Astrocyte of the cerebellum (primary cell): ENCODE measurements at regions of chr6 and their contacts with region 1.

Region 1: DNA sequence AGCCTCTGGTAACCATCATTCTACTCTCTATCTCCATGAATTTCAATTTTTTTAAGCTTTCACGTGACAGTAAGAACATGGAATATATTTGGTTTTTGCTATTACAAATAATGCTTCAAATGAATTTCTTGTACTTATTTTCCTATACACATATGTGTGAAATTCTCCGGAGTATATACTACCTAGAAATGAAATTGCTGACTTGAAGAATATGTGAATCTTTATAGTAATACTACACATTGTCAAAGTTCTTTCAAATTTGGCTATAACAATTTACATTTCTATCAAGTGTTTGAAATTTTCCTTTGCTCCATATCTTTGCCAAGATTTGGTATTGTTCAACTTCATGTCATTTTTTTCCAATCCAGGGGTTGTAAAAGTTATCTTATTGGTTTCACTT is 11.6 kb upstream of the VGLL2 start:
- DNase-seq: no peak
- H3K4me3 ChIP-seq: no peak overlapping the region
- CTCF ChIP-seq: no peak

Region 2: DNA sequence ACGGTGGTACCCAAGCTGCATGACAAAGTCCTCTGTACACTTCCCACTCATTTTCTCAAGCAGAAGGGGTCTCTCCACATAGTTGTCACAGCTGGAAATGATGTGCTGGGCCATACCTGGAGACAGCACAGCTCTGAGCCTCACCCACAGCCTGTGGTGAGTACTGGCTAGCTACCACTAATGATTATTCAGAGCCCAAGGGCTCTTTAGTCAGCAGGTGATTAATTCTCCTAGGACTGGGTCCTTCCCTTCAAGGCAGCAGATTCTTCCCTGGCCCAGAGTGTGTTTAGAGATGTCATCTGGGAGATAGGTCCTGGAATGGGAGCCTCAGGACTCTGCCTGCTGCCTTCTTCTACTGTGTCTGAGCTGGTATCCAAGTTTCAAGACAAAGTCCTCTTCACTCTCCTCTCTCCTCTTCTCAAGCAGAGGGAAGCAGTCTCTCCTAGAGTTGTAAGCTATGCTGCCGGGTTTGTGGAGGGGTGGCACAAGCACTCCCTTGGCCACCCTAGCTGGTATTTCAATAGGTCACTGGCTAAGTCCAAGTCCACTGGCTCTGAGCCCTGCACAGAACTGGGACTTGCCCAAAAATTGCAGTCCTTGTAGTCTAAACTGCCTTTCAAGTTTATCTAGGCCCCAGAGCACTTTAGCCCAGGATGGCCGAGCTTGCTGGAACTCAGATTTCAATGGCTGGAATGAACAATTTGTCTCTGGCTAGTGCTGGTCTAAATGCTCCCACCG is 38.3 kb before region 1 on chr6:
- in situ Hi-C with region 1: no loop called
- DNase-seq: no peak
- H3K4me3 ChIP-seq: no peak overlapping the region
- CTCF ChIP-seq: no peak

Region 3: GRCh38 chr6:117531346-117531745 is 277.6 kb after region 1 on chr6:
- in situ Hi-C with region 1: loop called (anchors 10 kb)
- DNase-seq: no peak
- H3K4me3 ChIP-seq: no peak overlapping the region
- CTCF ChIP-seq: no peak

Region 4: GRCh38 chr6:117810269-117810668 is 556.5 kb after region 1 on chr6:
- in situ Hi-C with region 1: no loop called
- DNase-seq: no peak
- H3K4me3 ChIP-seq: no peak overlapping the region
- CTCF ChIP-seq: no peak